Caco-2 (cell line): ENCODE measurements at regions of chr16 and their contacts with region 1.

Region 1: GRCh38 chr16:67993189-67994039 is 5.9 kb downstream of the DPEP2 start:
- DNase-seq: peak; percentile 80 to 86
- H3K4me3 ChIP-seq: no peak overlapping the region
- H3K4me3 Mint-ChIP-seq: peak overlapping the region; percentile 37
- H3K27ac Mint-ChIP-seq: no peak overlapping the region
- H3K4me1 ChIP-seq: peaks cover 7% of the 10 kb centered on the region
- H3K4me1 Mint-ChIP-seq: no peaks in the 10 kb centered on the region
- H3K27me3 ChIP-seq: no peaks in the 10 kb centered on the region
- H3K27me3 Mint-ChIP-seq: no peaks in the 10 kb centered on the region
- CTCF ChIP-seq: peak; percentile 95

Region 2: DNA sequence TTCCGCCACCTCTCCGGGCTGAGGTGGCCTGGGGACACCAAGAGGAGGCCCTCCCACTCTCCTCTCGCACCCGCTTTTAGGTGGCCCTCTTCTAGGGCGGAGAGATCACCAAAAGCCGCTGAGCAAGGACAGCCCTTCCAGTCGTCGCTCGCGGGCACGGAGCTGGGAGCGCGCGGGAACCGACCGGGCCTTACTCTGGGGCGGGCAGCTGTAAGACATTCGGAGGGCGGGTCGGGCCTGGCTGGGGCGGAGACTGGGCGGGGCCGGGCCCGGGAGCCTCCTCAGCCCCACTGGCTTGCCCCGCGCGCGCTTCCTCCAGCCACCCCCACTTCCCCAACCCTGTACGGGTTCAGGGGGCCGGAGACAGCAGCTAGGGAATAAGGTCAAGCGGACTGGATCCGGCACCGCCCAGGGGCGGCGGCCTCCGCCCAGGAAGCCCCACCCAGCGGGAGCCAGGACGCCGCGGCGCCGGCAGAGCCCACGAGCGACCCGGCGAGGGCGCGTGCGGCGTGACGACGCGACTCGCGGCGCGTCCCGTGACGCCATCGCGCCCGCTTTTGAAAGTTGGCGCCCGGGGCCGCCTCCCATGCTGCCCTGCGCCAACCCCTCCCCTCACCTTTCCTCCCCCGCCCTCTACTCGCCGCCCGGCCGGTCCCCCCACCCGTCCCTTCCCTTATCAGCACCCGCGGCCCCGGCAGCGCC is 431.4 kb before region 1 on chr16:
- CTCF ChIA-PET with region 1: no interaction called
- POLR2A ChIA-PET with region 1: no interaction called
- intact Hi-C with region 1: no loop called
- DNase-seq: peak; percentile 99
- H3K4me3 ChIP-seq: peak overlapping the region; percentile 100
- H3K4me3 Mint-ChIP-seq: peak overlapping the region; percentile 95
- H3K27ac Mint-ChIP-seq: peak overlapping the region; percentile 93
- H3K4me1 ChIP-seq: peaks cover 14% of the 10 kb centered on the region
- H3K4me1 Mint-ChIP-seq: peaks cover 23% of the 10 kb centered on the region
- H3K27me3 ChIP-seq: no peaks in the 10 kb centered on the region
- H3K27me3 Mint-ChIP-seq: no peaks in the 10 kb centered on the region
- CTCF ChIP-seq: no peak

Region 3: GRCh38 chr16:68040507-68041288 is 47.3 kb after region 1 on chr16:
- CTCF ChIA-PET with region 1: interaction called, 6 read pairs
- POLR2A ChIA-PET with region 1: no interaction called
- intact Hi-C with region 1: loop called (anchors 1 kb)
- DNase-seq: peak; percentile 86 to 92
- H3K4me3 ChIP-seq: no peak overlapping the region
- H3K4me3 Mint-ChIP-seq: no peak overlapping the region
- H3K27ac Mint-ChIP-seq: no peak overlapping the region
- H3K4me1 ChIP-seq: no peaks in the 10 kb centered on the region
- H3K4me1 Mint-ChIP-seq: no peaks in the 10 kb centered on the region
- H3K27me3 ChIP-seq: no peaks in the 10 kb centered on the region
- H3K27me3 Mint-ChIP-seq: no peaks in the 10 kb centered on the region
- CTCF ChIP-seq: peak; percentile 92 to 95

Region 4: DNA sequence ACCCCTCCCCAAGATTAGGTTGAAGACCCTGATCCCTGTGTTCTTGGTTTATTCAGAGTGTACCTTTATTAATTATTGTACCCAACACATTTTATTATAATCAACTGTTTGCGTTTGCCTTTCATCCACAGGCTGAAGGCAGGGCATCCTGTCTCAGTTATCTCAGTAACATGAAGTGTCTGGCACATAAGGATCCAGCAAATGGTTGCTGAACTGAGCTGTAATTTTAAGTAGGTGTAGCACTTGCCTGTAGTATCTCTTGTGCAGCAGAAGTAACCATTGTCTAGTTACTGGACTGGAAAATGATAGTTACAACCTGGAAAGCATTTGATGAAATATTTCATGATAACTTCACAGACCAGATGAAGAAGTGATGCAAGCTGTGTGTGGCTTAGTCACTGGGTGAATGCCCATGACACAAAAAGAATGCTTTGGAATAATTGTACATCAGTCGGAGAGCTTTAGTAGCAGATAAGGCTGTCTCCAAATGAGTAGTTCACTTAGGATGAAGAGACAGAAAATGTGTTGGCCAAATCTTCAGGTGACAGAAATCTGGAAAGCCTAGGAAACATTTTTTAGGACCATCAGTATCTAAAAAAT is 185.9 kb after region 1 on chr16:
- CTCF ChIA-PET with region 1: no interaction called
- POLR2A ChIA-PET with region 1: no interaction called
- intact Hi-C with region 1: no loop called
- DNase-seq: no peak
- H3K4me3 ChIP-seq: no peak overlapping the region
- H3K4me3 Mint-ChIP-seq: no peak overlapping the region
- H3K27ac Mint-ChIP-seq: no peak overlapping the region
- H3K4me1 ChIP-seq: no peaks in the 10 kb centered on the region
- H3K4me1 Mint-ChIP-seq: no peaks in the 10 kb centered on the region
- H3K27me3 ChIP-seq: no peaks in the 10 kb centered on the region
- H3K27me3 Mint-ChIP-seq: no peaks in the 10 kb centered on the region
- CTCF ChIP-seq: no peak